Naive thymus-derived CD8-positive, alpha-beta T cell (primary cell): ENCODE measurements at regions of chr22 and their contacts with region 1.

Region 1: DNA sequence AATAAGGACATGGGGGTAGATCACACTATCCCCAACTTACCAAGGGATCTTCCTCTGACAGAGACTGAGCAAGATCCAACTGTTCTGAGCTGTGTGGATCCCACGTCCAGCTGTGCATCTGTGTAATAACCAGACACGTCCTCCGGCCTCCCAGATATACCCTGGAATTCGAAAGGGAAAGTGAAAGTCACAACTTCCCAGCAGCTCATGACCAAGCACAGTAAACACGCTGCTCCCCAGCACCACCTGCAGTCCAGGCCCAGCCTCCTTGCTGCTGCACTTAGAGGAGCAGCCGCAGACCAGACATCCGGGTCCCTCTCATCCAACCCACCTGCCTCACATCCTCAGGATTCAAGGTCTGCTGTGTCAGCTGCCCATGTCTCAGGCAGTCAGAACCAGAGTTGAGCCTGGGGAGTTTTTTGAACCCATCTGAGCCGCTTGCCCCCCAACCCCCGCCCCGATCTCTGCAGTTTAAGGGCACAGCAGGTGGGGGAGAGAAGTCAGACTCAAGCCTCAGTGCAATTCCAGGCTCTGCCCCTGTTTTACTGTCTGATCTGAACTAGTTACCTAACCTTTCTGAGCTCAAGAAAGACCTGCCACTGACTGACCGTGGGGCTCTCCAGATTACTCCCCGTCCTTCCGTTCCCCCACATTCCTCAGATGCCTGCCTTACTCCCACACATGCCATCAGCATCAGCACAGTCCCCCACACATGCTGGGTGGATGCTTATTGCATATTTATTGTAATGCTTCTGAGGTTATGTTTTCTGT is at the start of gene APOL2:
- DNase-seq: peak; percentile 70 to 88 (median 81)
- ATAC-seq: peak; percentile 97 to 100
- H3K4me3 Mint-ChIP-seq: peak within 1 kb of the TSS; percentile 91 to 100 (median 98)
- H3K27ac Mint-ChIP-seq: peak within 1 kb of the TSS; percentile 92 to 100 (median 98)
- H3K4me1 Mint-ChIP-seq: peaks cover 34 to 56% (median 54%) of the 10 kb centered on the region in 4 donors
- H3K27me3 Mint-ChIP-seq: no peaks in the 10 kb centered on the region
- polyA plus RNA-seq, gene APOL2: 11.7 to 16.4 (median 16.3) TPM

Region 2: DNA sequence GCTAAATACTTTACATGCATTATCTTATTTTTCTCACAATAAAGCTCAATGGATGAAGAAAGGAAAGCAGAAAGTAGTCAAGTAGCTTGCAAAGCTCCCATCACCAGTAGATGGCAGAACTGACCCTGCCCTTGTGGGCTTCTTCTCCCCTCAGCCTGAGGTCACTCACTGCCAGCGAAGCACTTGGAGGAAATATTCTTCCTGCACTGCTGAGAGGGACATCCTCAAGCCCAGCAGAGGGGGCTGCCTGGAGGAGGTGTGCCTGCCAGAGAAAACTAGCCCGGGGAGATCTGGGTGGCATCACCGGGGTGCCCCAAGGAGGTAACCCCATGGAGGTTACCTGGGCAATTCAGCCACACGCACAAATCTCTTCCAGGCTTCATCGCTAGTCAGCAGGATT is 44.6 kb before region 1 on chr22:
- POLR2A ChIA-PET with region 1: no interaction called
- DNase-seq: peak in 8 of 10 donors; percentile 7 to 48 (median 27)
- ATAC-seq: peak; percentile 65 to 84
- H3K4me3 Mint-ChIP-seq: no peak overlapping the region
- H3K27ac Mint-ChIP-seq: no peak overlapping the region
- H3K4me1 Mint-ChIP-seq: peaks cover 9 to 24% (median 19%) of the 10 kb centered on the region in 4 donors
- H3K27me3 Mint-ChIP-seq: peaks cover 0 to 2% (median 0%) of the 10 kb centered on the region in 5 donors

Region 3: DNA sequence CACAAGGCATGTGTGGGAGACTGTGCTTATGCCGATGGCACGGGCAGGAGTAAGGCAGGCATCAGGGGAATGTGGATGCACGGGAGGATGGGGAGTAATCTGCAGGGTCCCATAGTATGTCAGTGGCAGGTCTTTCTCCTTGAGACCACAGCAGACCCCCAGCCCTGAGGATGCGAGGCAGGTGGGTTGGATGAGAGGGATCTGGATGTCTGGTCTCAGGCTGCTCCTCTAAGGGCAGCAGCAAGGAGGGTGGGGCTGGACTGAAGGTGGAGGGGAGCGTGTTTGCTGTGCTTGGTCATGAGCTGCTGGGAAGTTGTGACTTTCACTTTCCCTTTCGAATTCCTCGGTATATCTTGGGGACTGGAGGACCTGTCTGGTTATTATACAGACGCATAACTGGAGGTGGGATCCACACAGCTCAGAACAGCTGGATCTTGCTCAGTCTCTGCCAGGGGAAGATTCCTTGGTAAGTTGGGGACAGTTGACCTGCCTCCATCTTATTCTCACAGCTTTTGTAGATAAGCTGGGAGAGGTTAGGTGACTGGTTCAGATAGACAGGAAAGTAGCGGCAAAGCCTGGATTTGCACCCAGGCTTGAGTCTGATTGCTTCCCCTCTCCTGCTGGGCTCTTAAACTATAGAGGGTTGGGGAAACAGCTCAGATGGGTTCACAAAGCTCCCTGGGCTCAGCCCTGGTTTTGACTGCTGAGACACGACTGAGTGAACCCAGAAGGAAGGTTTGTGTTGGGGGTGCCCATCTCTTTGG is 13.3 kb after region 1 on chr22 and contains the start of gene APOL1:
- POLR2A ChIA-PET with region 1: interaction called, 10 read pairs
- DNase-seq: peak in 6 of 10 donors; percentile 21 to 66 (median 49)
- ATAC-seq: peak; percentile 91 to 95
- H3K4me3 Mint-ChIP-seq: peak within 1 kb of the TSS; percentile 90 to 98 (median 95)
- H3K27ac Mint-ChIP-seq: peak within 1 kb of the TSS; percentile 90 to 98 (median 96)
- H3K4me1 Mint-ChIP-seq: peaks cover 29 to 49% (median 46%) of the 10 kb centered on the region in 4 donors
- H3K27me3 Mint-ChIP-seq: no peaks in the 10 kb centered on the region
- polyA plus RNA-seq, gene APOL1: 3.3 to 11.8 (median 4.6) TPM

Region 4: GRCh38 chr22:36267896-36268485 is 28.4 kb after region 1 on chr22:
- POLR2A ChIA-PET with region 1: no interaction called
- DNase-seq: no peak
- ATAC-seq: no peak
- H3K4me3 Mint-ChIP-seq: no peak overlapping the region
- H3K27ac Mint-ChIP-seq: peak overlapping the region in 3 of 10 donors; percentile 6 to 72 (median 47)
- H3K4me1 Mint-ChIP-seq: peaks cover 0 to 10% (median 0%) of the 10 kb centered on the region in 4 donors
- H3K27me3 Mint-ChIP-seq: no peaks in the 10 kb centered on the region

Region 5: GRCh38 chr22:36286471-36287224 is 47.1 kb after region 1 on chr22:
- POLR2A ChIA-PET with region 1: no interaction called
- DNase-seq: peak; percentile 47 to 72 (median 67)
- ATAC-seq: peak; percentile 50 to 58
- H3K4me3 Mint-ChIP-seq: peak overlapping the region in 8 of 10 donors; percentile 41 to 78 (median 59)
- H3K27ac Mint-ChIP-seq: peak overlapping the region; percentile 77 to 95 (median 89)
- H3K4me1 Mint-ChIP-seq: peaks cover 24 to 45% (median 39%) of the 10 kb centered on the region in 4 donors
- H3K27me3 Mint-ChIP-seq: no peaks in the 10 kb centered on the region